ENCODE measurements at regions of chr13 and their contacts with region 1.

Region 1: GRCh38 chr13:31699650-31700049 is 39.7 kb upstream of the RXFP2 start:
- DNase-seq: peak; percentile 12
- ATAC-seq: peak; percentile 87
- H3K4me3 Mint-ChIP-seq: no peak overlapping the region
- H3K27ac Mint-ChIP-seq: no peak overlapping the region
- H3K4me1 Mint-ChIP-seq: peaks cover 33% of the 10 kb centered on the region
- H3K27me3 Mint-ChIP-seq: no peaks in the 10 kb centered on the region
- CTCF ChIP-seq: no peak

Region 2: DNA sequence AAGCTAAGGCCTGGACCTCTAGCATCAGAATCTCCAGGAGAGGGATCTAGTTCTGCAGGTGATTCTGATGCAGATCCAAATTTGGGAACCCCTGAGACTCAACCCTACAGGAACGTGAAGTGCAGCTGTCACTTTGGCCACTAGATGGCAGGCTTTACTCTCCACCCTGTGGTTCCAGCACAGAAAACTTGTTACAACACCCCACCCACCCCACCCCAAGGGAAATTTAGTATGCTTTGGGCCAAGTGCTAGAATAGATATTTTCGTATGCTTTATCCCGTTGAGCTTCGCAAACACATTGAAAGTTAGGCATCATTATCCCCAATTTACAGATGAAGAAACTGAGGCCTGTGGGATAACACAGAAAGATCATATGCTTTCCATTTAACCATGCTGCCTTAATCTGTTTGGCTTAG is 267.9 kb before region 1 on chr13:
- CTCF ChIA-PET with region 1: interaction called, 12 read pairs
- POLR2A ChIA-PET with region 1: no interaction called
- DNase-seq: peak; percentile 79
- ATAC-seq: peak; percentile 58
- H3K4me3 Mint-ChIP-seq: no peak overlapping the region
- H3K27ac Mint-ChIP-seq: no peak overlapping the region
- H3K4me1 Mint-ChIP-seq: 0 out of 2 replicates have a peak, but pooled peaks cover 4% of the 10 kb centered on the region
- H3K27me3 Mint-ChIP-seq: no peaks in the 10 kb centered on the region
- CTCF ChIP-seq: peak; percentile 92

Region 3: GRCh38 chr13:31588893-31589292 is 110.8 kb before region 1 on chr13:
- CTCF ChIA-PET with region 1: no interaction called
- POLR2A ChIA-PET with region 1: no interaction called
- DNase-seq: no peak
- ATAC-seq: no peak
- H3K4me3 Mint-ChIP-seq: no peak overlapping the region
- H3K27ac Mint-ChIP-seq: no peak overlapping the region
- H3K4me1 Mint-ChIP-seq: peaks cover 9% of the 10 kb centered on the region
- H3K27me3 Mint-ChIP-seq: peaks cover 3% of the 10 kb centered on the region; the same call in 1 of the 2 replicates
- CTCF ChIP-seq: no peak